Activated CD8-positive, alpha-beta T cell treated with anti-CD3 and anti-CD28 coated beads for 36 hours (primary cell): ENCODE measurements at regions of chr17 and their contacts with region 1.

Region 1: DNA sequence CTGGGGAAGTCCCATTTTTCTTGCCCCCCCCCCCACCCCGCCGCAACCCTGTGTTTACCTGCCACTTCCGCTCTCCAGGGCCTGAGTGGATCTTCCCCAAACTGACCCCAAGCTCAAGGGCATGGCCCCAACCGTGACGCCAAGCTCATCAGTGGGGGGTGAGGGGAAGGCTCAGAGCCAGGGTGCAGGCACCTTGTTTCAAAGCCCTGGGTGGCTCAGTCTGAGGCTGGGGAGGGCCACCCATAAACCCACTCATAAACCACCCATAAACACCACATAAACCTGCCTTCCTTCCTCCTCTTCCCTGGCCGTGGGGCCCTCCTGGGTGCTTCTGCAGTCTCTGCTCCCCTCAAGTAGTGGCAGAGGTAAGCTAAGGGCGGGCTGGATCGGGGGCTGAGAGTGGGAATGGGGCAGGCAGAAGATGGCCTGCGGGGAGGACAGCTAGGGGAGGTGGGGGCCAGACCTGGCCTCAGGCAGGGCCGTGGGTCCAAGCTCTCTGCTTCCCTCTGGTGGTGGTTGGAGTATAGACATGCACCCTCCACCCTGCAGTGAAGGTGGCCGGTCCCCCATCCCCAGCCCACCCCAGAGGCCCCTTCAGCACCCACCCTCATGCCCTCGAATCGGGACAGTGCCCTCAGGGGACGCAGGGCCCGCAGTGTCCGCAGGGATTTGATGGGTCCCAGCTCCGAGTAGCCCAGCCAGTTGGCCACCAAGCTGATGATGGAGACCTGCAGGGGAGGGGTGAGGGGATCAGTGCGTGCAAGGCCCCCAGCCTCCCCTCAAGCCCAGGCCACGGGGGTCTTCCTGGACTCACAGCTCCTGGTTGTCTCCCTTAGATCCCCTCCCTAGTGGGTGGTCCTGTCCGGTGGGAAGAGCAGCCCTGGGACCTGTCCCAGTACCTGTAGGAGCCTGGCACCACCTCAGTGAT is 14.6 kb upstream of the CD79B start:
- DNase-seq: peak; percentile 74
- ATAC-seq: peak; percentile 92
- H3K4me3 Mint-ChIP-seq: peak overlapping the region; percentile 50
- H3K27ac Mint-ChIP-seq: peak overlapping the region; percentile 77
- H3K4me1 Mint-ChIP-seq: peaks cover 20% of the 10 kb centered on the region
- H3K27me3 Mint-ChIP-seq: no peaks in the 10 kb centered on the region
- CTCF ChIP-seq: peak; percentile 89

Region 2: DNA sequence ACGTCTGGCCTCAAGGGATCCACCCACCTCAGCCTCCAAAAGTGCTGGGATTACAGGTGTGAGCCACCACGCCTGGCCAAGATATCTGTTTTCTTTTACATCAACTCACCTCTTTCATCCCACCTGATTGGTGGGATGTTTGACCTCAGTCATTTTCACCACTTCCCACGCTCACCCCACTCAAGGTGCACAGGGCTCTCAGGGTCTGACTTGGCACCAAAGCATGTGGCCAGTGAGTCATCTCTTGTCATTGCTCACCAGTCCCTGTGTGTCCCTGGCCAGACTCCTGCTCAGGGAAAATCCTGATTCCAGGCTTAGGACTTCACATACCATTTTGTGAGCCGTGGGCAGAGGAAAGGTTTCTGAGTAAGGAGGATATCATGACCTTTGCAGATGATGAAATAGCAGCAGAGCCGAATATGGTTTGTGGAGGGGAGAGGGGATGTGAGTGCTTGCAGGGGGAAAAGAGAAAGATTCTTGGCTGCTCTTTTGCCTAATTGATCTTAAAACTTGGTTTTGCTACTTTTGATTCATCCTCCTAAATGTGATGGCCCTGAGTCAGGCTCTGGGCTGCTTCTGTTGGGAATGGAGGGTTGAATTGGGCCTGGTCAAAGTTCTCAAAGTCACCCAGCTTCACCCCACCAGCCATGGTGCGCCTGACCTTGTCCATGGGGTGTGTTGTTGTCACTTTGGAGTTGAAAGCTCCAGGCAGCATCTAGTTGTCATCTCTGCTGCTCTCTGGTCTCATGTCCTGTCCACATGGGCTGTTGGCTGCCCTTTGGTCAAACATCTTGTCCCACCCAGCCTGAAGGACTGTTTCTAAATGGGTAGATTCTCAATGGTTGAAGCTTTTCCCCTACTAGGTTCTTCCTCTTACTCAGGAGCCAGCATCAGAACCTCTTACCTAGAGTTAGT is 429.5 kb before region 1 on chr17:
- CTCF ChIA-PET with region 1: no interaction called
- POLR2A ChIA-PET with region 1: no interaction called
- intact Hi-C with region 1: no loop called
- DNase-seq: peak; percentile 73
- ATAC-seq: peak; percentile 89
- H3K4me3 Mint-ChIP-seq: no peak overlapping the region
- H3K27ac Mint-ChIP-seq: no peak overlapping the region
- H3K4me1 Mint-ChIP-seq: peaks cover 13% of the 10 kb centered on the region
- H3K27me3 Mint-ChIP-seq: peaks cover 9% of the 10 kb centered on the region
- CTCF ChIP-seq: no peak

Region 3: GRCh38 chr17:63904316-63904715 is 42.4 kb before region 1 on chr17:
- CTCF ChIA-PET with region 1: interaction called, 15 read pairs
- POLR2A ChIA-PET with region 1: no interaction called
- intact Hi-C with region 1: no loop called
- DNase-seq: no peak
- ATAC-seq: no peak
- H3K4me3 Mint-ChIP-seq: no peak overlapping the region
- H3K27ac Mint-ChIP-seq: no peak overlapping the region
- H3K4me1 Mint-ChIP-seq: peaks cover 8% of the 10 kb centered on the region
- H3K27me3 Mint-ChIP-seq: peaks cover 3% of the 10 kb centered on the region
- CTCF ChIP-seq: no peak

Region 4: GRCh38 chr17:63925645-63926044 is 21.1 kb before region 1 on chr17:
- CTCF ChIA-PET with region 1: interaction called, 95 read pairs
- POLR2A ChIA-PET with region 1: no interaction called
- intact Hi-C with region 1: no loop called
- DNase-seq: no peak
- ATAC-seq: no peak
- H3K4me3 Mint-ChIP-seq: no peak overlapping the region
- H3K27ac Mint-ChIP-seq: no peak overlapping the region
- H3K4me1 Mint-ChIP-seq: peaks cover 2% of the 10 kb centered on the region
- H3K27me3 Mint-ChIP-seq: no peaks in the 10 kb centered on the region
- CTCF ChIP-seq: no peak

Region 5: GRCh38 chr17:63966646-63967264 is 20.1 kb after region 1 on chr17:
- CTCF ChIA-PET with region 1: interaction called, 16 read pairs
- POLR2A ChIA-PET with region 1: interaction called, 3 read pairs
- intact Hi-C with region 1: no loop called
- DNase-seq: peak; percentile 86
- ATAC-seq: peak; percentile 95
- H3K4me3 Mint-ChIP-seq: no peak overlapping the region
- H3K27ac Mint-ChIP-seq: no peak overlapping the region
- H3K4me1 Mint-ChIP-seq: peaks cover 18% of the 10 kb centered on the region
- H3K27me3 Mint-ChIP-seq: no peaks in the 10 kb centered on the region
- CTCF ChIP-seq: no peak

Region 6: GRCh38 chr17:63993368-63993985 is 46.8 kb after region 1 on chr17:
- CTCF ChIA-PET with region 1: interaction called, 15 read pairs
- POLR2A ChIA-PET with region 1: no interaction called
- intact Hi-C with region 1: no loop called
- DNase-seq: no peak
- ATAC-seq: no peak
- H3K4me3 Mint-ChIP-seq: no peak overlapping the region
- H3K27ac Mint-ChIP-seq: peak overlapping the region; percentile 37
- H3K4me1 Mint-ChIP-seq: peaks cover 38% of the 10 kb centered on the region
- H3K27me3 Mint-ChIP-seq: no peaks in the 10 kb centered on the region
- CTCF ChIP-seq: no peak

Region 7: DNA sequence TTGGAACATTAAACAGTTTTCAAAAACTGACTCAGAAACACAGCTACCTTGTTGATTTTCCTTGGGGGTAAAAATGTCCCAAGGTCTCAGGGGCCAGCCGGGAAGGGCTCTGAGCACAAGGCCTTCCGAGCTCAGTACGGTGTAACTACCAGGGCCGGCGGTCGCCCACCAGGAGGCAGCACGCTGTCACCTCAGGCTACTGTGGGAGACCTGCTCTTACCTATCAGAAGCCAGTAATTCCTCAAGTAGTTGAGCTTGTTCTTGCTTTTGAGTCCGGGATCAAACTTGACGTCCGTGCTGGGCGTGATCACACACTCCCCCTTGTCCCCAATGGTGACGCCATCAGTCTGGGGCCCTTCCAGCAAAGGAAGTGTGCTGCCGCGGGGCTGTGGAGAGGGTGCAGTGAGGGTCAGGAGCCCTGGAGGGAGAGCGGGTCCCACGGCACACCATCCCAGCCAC is 117.1 kb after region 1 on chr17:
- CTCF ChIA-PET with region 1: no interaction called
- POLR2A ChIA-PET with region 1: no interaction called
- intact Hi-C with region 1: no loop called
- DNase-seq: peak; percentile 78
- ATAC-seq: peak; percentile 45
- H3K4me3 Mint-ChIP-seq: peak overlapping the region; percentile 54
- H3K27ac Mint-ChIP-seq: peak overlapping the region; percentile 78
- H3K4me1 Mint-ChIP-seq: peaks cover 73% of the 10 kb centered on the region
- H3K27me3 Mint-ChIP-seq: no peaks in the 10 kb centered on the region
- CTCF ChIP-seq: peak; percentile 71